Activated B cell treated with CpG ODN at 0.5 μM for 24 hours (primary cell): ENCODE measurements at regions of chr1 and their contacts with region 1.

Region 1: GRCh38 chr1:40373338-40374283 is at the start of gene SMAP2:
- DNase-seq: peak; percentile 91
- ATAC-seq: peak; percentile 88
- H3K4me3 Mint-ChIP-seq: peak within 1 kb of the TSS; percentile 97
- H3K27ac Mint-ChIP-seq: peak within 1 kb of the TSS; percentile 96
- H3K4me1 Mint-ChIP-seq: peaks cover 52% of the 10 kb centered on the region
- H3K27me3 Mint-ChIP-seq: no peaks in the 10 kb centered on the region
- CTCF ChIP-seq: no peak
- total RNA-seq, gene SMAP2: 202 and 220 TPM in 2 replicates

Region 2: DNA sequence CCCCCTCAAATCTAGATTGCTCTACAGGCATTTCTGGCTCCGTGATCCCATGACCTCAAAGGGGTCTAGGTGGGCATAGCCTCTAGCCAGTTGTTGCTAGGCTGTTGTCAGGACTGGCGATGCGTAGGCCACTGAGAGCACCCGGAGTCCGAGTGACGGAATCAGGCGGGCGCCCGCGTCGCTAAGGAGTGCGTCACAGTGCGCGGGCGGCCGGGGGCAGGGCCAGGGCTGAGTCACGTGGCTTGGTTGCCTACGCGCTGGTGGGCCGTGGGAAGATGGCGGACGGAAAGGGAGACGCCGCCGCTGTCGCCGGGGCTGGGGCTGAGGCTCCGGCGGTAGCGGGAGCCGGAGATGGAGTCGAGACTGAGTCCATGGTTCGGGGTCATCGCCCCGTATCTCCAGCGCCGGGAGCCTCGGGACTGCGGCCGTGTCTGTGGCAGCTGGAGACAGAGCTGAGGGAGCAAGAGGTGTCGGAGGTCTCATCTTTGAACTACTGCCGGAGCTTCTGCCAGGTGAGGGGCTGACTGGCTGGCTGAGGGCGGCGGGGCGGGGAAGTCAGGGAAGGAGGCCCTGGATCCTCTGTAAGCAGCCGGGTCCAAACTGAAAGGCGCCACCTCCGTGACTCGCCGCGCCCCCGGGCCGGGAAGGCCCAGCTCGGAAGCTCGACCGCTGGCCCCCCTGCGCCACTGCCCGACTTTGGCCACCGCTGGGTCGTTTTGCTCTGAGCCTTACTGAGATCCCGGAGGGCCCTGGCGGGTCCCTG is 212.3 kb before region 1 on chr1 and contains the start of gene RLF:
- CTCF ChIA-PET with region 1: no interaction called
- POLR2A ChIA-PET with region 1: interaction called, 12 read pairs
- intact Hi-C with region 1: no loop called
- DNase-seq: peak; percentile 94
- ATAC-seq: peak; percentile 96
- H3K4me3 Mint-ChIP-seq: no peak within 1 kb of the TSS
- H3K27ac Mint-ChIP-seq: no peak within 1 kb of the TSS
- H3K4me1 Mint-ChIP-seq: peaks cover 22% of the 10 kb centered on the region
- H3K27me3 Mint-ChIP-seq: no peaks in the 10 kb centered on the region
- CTCF ChIP-seq: no peak
- total RNA-seq, gene RLF: 18.1 and 19.2 TPM in 2 replicates

Region 3: GRCh38 chr1:40421431-40422384 is 48.1 kb after region 1 on chr1:
- CTCF ChIA-PET with region 1: no interaction called
- POLR2A ChIA-PET with region 1: no interaction called
- intact Hi-C with region 1: no loop called
- DNase-seq: no peak
- ATAC-seq: no peak
- H3K4me3 Mint-ChIP-seq: no peak overlapping the region
- H3K27ac Mint-ChIP-seq: peak overlapping the region; percentile 71
- H3K4me1 Mint-ChIP-seq: peaks cover 36% of the 10 kb centered on the region
- H3K27me3 Mint-ChIP-seq: no peaks in the 10 kb centered on the region
- CTCF ChIP-seq: no peak